Psoas muscle (tissue), 8 donors: ENCODE measurements at regions of chr17 and their contacts with region 1.

Region 1: DNA sequence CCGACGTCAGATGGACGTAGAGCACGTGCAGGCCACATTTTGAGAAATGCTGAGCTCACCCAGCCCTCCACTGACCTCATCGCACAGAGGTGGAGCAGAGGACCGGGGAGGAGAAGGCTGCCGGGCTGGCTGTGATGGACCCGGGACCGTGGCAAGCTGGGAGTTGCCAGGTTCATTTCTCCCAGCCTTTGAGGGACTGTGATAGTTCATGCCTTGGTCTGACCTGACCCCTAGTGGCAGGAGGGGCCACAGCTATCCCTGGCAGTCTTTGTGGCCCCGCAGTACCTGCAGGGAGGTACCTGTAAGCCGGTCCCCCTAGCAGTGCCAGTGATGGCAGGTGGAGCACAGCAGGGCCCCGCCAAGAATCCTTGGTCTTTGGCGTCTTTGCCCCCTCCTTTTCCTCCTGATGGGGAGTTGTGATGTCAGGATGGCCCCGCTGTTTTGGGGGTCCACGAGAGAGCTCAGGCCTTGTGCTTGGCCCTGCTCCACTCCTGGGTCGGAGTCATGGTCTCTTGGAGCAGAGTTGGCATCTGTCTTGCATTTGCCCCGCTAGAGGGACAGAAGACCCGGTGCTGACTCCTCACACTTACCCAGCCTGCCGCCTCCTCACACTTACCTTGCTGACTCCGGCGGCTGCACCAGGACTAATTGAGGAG is 50.4 kb downstream of the OR1D5 start:
- DNase-seq: peak; percentile 64 to 80
- ATAC-seq: peak; percentile 90 to 99 (median 96)
- H3K4me3 ChIP-seq: no peak overlapping the region
- H3K27ac ChIP-seq: no peak overlapping the region
- H3K4me1 ChIP-seq: no peaks in the 10 kb centered on the region
- H3K27me3 ChIP-seq: no peaks in the 10 kb centered on the region
- CTCF ChIP-seq: peak; percentile 91

Region 2: DNA sequence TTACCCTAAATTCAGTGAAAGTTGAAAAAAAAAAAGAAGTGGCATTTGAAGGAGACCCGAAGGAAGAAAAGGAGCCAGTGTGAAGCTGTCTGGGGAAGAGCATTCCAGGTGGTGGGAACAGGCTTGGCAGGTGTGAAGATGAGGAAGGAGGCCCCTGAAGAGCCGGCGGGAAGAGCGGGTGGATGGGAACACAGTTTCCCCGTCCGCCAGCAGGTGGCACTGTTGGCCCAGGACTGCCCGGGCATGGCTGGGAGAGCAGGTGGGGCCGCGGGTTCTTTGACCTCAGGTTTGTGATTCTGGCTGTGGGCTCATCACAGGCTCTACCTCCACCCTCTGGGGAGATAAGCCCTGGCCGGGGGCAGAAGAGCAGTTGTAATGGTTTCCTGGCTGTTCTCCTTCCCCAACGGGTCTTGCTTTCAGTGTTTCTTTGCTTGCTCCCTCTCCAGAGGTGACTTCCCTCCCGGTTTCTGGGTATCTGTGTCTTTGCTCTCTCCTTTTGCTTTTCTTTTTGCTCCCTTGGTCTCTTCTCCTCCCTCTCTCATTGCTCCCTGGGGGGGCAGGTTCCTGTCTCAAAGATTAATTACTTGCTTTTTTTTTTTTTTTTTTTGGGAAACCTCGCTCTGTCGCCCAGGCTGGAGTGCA is 184.5 kb before region 1 on chr17:
- intact Hi-C with region 1: loop called in 1 of 2 experiments (anchors 1 kb)
- DNase-seq: peak; percentile 72 to 83
- ATAC-seq: peak in 3 of 4 donors; percentile 46 to 74 (median 61)
- H3K4me3 ChIP-seq: no peak overlapping the region
- H3K27ac ChIP-seq: no peak overlapping the region
- H3K4me1 ChIP-seq: no peaks in the 10 kb centered on the region
- H3K27me3 ChIP-seq: peaks cover 0 to 14% (median 3%) of the 10 kb centered on the region in 3 donors
- CTCF ChIP-seq: peak; percentile 81

Region 3: GRCh38 chr17:2847381-2848333 is 165.4 kb before region 1 on chr17:
- intact Hi-C with region 1: loop called (anchors 2 to 5 kb)
- DNase-seq: no peak
- ATAC-seq: no peak
- H3K4me3 ChIP-seq: no peak overlapping the region
- H3K27ac ChIP-seq: no peak overlapping the region
- H3K4me1 ChIP-seq: no peaks in the 10 kb centered on the region
- H3K27me3 ChIP-seq: peaks cover 0 to 30% (median 4%) of the 10 kb centered on the region in 3 donors
- CTCF ChIP-seq: no peak